ENCODE measurements at regions of chr17 and their contacts with region 1.

Region 1: DNA sequence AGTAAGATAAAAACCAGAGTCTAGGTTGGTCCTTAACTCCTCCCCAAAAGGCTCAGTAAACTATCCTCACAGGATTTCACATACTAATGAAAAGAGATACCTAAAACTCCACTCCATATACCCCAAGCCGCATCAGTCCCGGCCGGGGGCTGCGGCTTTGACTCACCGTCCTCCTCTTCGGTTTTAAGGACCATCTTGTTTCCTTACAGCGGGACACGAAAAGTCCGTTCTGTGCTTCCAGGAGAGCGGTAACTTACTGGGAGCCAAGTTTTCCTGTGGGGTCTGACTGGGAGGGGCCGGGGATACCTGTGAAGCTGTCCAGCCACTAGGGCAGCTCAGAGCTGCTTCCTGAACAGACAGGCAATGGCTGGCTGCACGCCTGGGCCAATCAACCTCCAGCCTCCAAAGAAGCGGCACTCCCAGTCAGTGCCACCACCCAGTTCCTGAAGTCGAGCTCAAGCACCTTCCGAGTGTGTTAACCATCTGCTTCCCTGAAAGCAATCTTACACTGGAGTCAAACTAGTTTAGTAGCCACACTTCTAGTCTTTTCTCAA is 45.5 kb downstream of the CYTH1 start:
- DNase-seq: peak; percentile 74
- H3K4me3 Mint-ChIP-seq: peak overlapping the region; percentile 97
- H3K27ac Mint-ChIP-seq: peak overlapping the region; percentile 97
- H3K4me1 Mint-ChIP-seq: peaks cover 91% of the 10 kb centered on the region
- H3K27me3 Mint-ChIP-seq: no peaks in the 10 kb centered on the region

Region 2: DNA sequence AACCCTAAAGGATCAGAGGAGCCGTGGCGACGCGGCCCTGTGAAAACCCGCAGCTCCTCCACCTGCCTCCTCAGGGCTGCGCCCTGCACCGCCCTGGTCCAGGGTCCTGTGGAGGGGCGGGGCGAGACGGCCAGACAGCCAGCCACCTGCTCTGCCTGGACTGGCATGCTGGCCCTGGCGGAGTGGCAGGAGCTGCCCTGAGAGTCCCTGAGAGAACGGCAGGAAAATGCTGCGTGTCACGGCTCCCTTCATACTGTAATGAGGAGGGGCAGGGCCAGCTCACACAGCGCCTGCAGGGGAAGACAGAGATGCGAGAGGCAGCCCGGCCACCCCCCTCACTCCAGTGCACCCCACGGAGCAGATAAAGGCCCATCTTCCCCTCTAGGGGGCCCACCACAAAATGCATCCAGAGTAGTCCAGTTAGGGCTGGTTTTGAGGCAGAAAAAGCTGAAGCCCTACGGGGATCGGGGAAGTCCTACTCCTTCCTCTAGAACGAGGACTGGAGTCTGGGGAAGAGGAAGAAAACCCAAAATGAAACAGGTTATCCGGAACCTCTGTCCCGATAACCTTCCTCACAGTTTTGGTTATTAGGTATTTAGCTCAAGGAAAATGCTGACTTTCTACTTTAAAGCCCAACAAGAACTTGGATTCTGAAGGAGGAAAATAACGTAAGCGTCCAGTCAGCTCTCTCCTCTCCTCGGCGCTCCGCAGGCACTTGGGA is 61.8 kb before region 1 on chr17:
- CTCF ChIA-PET with region 1: no interaction called
- POLR2A ChIA-PET with region 1: no interaction called
- DNase-seq: no peak
- H3K4me3 Mint-ChIP-seq: no peak overlapping the region
- H3K27ac Mint-ChIP-seq: no peak overlapping the region
- H3K4me1 Mint-ChIP-seq: peaks cover 11% of the 10 kb centered on the region
- H3K27me3 Mint-ChIP-seq: no peaks in the 10 kb centered on the region

Region 3: DNA sequence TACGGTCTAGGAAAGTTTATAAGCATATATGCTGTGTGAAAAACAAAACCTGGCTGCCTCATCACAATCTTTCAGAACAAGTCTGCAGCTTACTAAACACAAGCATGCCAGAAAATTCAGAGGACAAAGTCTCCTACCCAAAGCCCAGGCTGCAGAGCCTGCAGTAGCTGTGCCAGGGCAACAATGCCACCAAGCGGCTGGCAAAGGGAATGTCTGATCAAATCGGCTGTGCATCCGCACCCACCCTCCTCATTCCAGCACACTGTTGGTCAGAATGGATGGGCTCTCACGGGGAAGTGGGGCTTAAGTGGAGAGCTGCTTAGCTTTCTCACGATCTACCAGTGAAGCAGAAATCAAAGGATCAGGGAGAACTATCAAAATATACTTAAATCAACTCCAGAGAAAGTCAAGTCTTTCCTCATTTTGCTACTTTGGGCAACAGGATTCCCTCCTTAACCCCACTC is 28.1 kb before region 1 on chr17:
- CTCF ChIA-PET with region 1: interaction called, 14 read pairs
- POLR2A ChIA-PET with region 1: interaction called, 37 read pairs
- DNase-seq: peak; percentile 68
- H3K4me3 Mint-ChIP-seq: peak overlapping the region; percentile 29
- H3K27ac Mint-ChIP-seq: peak overlapping the region; percentile 80
- H3K4me1 Mint-ChIP-seq: peaks cover 68% of the 10 kb centered on the region
- H3K27me3 Mint-ChIP-seq: no peaks in the 10 kb centered on the region

Region 4: GRCh38 chr17:78716814-78717393 is 19.7 kb before region 1 on chr17:
- CTCF ChIA-PET with region 1: interaction called, 14 read pairs
- POLR2A ChIA-PET with region 1: interaction called, 50 read pairs
- DNase-seq: no peak
- H3K4me3 Mint-ChIP-seq: peak overlapping the region; percentile 9
- H3K27ac Mint-ChIP-seq: no peak overlapping the region
- H3K4me1 Mint-ChIP-seq: peaks cover 88% of the 10 kb centered on the region
- H3K27me3 Mint-ChIP-seq: no peaks in the 10 kb centered on the region

Region 5: DNA sequence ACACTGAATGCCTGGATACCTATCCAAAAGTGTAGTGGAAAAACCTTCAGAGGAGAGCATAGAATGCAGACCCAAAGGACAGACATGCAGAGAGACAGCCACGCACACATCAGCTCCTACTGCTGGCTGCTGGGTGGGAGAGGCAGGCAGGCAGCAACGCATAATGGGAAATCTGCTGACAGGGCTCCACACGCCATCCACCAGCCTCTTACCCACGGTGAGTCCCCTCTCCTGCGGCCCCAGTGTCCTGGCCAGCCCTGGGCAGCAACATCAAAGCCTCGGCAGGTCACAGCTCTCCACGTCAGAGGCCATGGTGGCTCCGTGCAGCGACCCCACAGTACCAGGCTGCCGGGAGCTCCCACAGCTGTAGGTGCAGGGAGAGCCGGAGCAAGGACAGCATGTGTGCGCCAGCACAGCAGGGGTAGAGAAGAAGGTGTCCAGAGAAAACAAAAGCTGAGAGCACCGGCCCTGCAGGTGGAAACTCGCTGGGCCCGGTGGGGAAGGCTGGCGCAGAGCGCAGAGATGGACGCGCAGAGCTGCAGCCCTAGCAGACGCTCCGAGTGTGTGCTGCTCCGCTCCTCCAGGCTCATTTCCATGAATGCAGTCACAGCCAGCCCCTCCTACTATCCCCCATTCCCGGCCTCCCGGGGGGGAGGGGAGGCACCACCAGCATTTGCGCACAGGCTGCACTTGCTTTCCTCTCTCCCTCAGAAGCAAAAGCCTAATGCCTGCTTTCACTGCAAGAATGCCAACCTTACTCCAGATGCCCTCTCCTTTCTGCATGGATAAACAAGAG is 13.4 kb before region 1 on chr17:
- CTCF ChIA-PET with region 1: interaction called, 7 read pairs
- POLR2A ChIA-PET with region 1: interaction called, 50 read pairs
- DNase-seq: no peak
- H3K4me3 Mint-ChIP-seq: no peak overlapping the region
- H3K27ac Mint-ChIP-seq: no peak overlapping the region
- H3K4me1 Mint-ChIP-seq: peaks cover 92% of the 10 kb centered on the region
- H3K27me3 Mint-ChIP-seq: no peaks in the 10 kb centered on the region

Region 6: DNA sequence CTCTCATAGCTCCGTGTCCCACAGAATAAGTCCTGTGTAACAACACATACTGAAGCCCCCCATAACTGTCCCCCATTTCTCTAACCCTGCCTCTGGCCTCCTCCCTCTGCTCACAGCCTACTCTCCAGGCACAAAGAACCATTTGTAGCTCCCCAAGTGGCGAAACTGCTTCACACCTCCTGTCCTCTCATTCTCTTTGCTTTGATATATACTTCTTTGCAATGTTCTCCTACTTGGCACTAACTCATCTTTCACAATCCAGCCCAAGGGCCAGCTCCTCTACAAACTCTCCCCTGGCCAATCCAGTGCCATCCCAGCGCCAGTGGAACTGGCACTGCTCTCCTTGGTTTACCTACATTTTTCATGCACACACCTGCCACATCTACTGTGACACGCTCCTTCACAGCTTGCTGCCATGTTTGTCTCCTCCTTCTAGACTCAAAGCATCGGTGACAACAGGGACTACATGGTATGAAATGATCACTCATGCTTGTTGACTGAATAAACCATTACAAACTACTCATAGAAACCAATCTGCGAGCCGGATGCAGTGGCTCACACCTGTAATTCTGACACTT is 32.7 kb after region 1 on chr17:
- CTCF ChIA-PET with region 1: interaction called, 6 read pairs
- POLR2A ChIA-PET with region 1: interaction called, 38 read pairs
- DNase-seq: no peak
- H3K4me3 Mint-ChIP-seq: no peak overlapping the region
- H3K27ac Mint-ChIP-seq: no peak overlapping the region
- H3K4me1 Mint-ChIP-seq: peaks cover 48% of the 10 kb centered on the region
- H3K27me3 Mint-ChIP-seq: no peaks in the 10 kb centered on the region

Region 7: DNA sequence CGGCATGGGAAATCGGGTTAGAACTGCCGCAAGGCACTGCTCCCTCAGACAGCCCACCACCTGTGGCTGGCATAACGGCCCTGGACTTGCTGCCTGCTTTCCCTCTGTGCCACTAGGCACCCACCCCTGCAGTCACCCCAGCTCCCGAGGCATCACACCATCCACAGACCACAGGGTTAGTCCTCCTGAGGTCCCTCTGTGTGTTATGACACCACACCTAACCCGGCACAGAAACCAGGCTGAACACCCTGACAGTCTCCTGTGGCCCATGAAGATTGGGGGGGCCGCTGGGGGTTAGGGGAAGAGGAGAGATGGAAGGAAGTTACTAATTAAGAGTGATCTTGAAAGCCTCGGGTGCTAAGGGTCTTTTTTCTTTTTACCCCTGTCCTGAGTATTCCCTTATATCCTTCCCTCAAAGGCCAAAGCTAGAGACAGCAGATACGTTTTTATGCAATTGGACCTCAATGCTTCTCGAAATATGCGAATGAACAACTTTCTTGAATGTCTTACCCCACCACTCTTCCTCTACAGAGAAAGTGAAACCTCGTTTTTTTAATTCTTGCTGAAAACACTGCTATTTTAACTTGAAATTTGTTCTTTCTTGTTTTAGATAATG is 38.5 kb after region 1 on chr17:
- CTCF ChIA-PET with region 1: interaction called, 3 read pairs
- POLR2A ChIA-PET with region 1: interaction called, 38 read pairs
- DNase-seq: peak; percentile 82
- H3K4me3 Mint-ChIP-seq: peak overlapping the region; percentile 78
- H3K27ac Mint-ChIP-seq: peak overlapping the region; percentile 96
- H3K4me1 Mint-ChIP-seq: peaks cover 65% of the 10 kb centered on the region
- H3K27me3 Mint-ChIP-seq: no peaks in the 10 kb centered on the region

Region 8: DNA sequence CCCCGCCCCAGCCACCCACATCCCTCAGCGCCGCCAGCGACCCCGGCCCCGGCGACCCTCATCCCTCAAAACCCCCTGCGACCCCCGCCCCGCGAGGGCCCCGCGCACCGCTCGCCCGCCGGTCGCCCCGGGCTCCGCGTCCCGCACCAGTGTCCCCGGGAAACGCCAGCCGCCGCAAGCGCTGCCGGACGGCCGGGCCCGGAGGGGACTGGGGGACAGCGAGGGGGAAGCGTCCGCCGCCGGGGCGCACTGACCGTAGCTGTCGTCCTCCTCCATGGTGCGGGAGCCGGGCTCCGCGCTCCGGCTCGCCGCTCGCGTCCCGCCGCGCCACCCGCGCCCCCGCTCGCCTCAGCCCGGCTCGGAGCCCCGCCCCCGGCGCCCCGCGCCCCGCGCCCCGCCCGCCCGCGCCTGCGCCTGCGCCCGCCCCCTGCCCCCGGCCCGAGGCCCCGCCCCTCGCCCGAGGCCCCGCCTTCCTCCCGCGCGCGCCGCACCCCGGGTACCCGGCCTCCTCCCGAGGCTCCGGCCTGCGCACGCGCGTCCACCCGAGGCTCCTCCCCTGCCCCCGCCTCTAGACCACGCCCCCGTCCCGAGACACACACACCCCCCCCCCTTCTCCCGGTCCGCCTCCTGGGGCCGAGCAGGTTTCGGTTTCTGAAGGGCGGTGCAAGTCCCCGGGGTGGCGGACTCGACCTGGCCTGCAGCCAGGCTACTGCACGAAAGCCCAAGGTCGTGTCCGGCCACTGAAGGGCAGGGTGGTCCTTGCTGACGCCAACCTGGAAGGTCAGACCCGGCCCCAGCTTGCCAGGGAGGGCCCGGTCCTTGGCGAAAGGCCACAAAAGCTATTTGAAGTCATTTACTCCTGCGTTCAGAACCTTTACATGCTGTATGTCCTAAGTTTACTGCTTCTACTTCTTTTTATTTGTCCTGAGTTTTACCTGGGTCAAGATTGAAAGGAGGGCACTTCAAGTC is 45.6 kb after region 1 on chr17 and contains the start of gene CYTH1:
- CTCF ChIA-PET with region 1: interaction called, 6 read pairs
- POLR2A ChIA-PET with region 1: interaction called, 38 read pairs
- DNase-seq: peak; percentile 98
- H3K4me3 Mint-ChIP-seq: peak within 1 kb of the TSS; percentile 85
- H3K27ac Mint-ChIP-seq: peak within 1 kb of the TSS; percentile 98
- H3K4me1 Mint-ChIP-seq: peaks cover 56% of the 10 kb centered on the region
- H3K27me3 Mint-ChIP-seq: no peaks in the 10 kb centered on the region
- total RNA-seq, gene CYTH1: 288 to 309 TPM